ENCODE measurements at regions of chr21 and their contacts with region 1.

Region 1: DNA sequence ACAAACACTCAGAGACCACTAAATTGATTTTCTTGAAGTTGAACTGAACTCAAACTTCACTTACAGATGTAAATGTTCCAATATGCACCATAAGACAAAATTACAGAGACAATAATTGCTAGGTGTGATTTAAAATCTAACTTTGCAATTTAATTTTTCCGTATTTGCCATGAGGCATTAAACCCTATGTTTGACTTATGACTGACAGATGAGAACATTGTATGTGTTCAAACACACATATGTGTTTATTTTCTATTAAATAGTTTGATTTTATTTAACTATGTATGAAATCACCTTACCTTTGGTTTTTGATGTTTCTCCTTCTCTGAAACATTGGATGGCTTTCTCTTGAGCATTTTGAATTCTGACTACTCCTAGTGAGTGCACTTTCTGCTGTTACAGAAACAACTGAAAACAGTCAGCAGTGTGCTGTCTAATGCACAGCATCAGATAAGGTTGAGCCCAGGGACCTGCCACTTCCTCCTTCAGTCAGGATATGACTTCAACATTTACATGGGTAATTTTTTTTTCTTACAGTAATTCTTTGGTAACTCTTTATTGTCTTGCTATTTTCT is at the start of gene SAMSN1:
- DNase-seq: peak; percentile 83
- H3K4me3 Mint-ChIP-seq: peak within 1 kb of the TSS; percentile 89
- H3K27ac Mint-ChIP-seq: peak within 1 kb of the TSS; percentile 95
- H3K4me1 Mint-ChIP-seq: peaks cover 49% of the 10 kb centered on the region
- H3K27me3 Mint-ChIP-seq: no peaks in the 10 kb centered on the region
- total RNA-seq, gene SAMSN1: 47.5 to 48.4 TPM

Region 2: DNA sequence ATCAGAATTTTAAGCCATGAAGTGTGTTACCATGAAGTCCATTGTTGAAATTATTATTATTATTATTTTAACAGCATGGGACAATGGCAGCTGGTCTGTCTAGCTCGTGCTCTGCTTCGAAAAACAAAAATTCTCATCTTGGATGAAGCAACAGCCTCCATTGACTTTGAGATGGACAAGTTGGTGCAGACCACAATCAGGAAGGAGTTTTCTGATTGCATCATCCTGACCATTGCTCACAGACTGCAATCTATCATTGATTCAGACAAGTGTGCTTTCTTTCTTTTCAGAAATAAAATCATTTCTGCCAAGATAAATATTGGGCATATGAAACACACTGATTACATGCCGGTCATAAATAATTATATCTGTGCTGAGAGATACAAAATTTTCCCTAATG is 184.0 kb before region 1 on chr21:
- CTCF ChIA-PET with region 1: no interaction called
- POLR2A ChIA-PET with region 1: no interaction called
- intact Hi-C with region 1: no loop called
- DNase-seq: no peak
- H3K4me3 Mint-ChIP-seq: no peak overlapping the region
- H3K27ac Mint-ChIP-seq: no peak overlapping the region
- H3K4me1 Mint-ChIP-seq: no peaks in the 10 kb centered on the region
- H3K27me3 Mint-ChIP-seq: peaks cover 10% of the 10 kb centered on the region

Region 3: DNA sequence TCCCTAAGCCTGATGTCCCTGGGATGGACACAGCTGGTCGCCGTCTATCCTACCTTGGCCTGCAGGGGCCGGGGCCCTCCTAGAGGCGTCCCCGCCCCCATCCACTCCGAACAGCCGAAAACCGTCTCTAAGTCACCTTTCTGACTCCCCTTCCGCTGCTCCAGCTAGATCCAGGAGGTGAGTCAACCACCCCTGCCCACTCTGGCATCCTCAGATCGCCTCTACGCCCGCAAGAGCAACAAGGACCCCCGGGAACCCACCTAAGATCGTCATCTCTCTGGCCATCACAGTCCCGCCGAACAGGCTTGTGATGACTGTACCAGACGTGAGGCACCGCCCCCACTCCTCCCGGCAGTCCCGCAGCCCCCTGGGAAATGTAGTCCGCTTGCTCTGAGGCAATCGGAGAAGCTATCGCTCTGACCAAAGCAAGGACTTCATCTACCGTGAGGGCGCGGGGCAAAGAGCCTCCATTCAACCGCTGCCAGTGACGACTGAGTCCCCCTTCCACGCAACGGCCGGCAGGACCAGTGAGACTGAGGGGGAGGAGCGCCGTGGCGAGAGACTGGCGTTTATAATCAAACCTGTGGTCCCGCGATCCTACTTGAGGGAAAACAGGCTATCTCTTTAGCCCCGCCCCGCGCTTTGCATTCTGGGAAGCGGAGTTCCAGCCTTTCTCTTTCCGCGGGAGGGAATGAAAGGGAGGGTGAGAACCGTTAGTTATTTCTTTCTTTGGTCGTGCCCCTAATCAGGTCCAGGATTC is 163.0 kb before region 1 on chr21 and contains the start of gene HSPA13:
- CTCF ChIA-PET with region 1: no interaction called
- POLR2A ChIA-PET with region 1: no interaction called
- intact Hi-C with region 1: loop called (anchors 2 kb)
- DNase-seq: peak; percentile 100
- H3K4me3 Mint-ChIP-seq: peak within 1 kb of the TSS; percentile 95
- H3K27ac Mint-ChIP-seq: peak within 1 kb of the TSS; percentile 95
- H3K4me1 Mint-ChIP-seq: peaks cover 27% of the 10 kb centered on the region
- H3K27me3 Mint-ChIP-seq: no peaks in the 10 kb centered on the region
- total RNA-seq, gene HSPA13: 48.5 to 49.1 TPM

Region 4: GRCh38 chr21:14480411-14481031 is 65.5 kb before region 1 on chr21:
- CTCF ChIA-PET with region 1: no interaction called
- POLR2A ChIA-PET with region 1: no interaction called
- intact Hi-C with region 1: no loop called
- DNase-seq: no peak
- H3K4me3 Mint-ChIP-seq: no peak overlapping the region
- H3K27ac Mint-ChIP-seq: no peak overlapping the region
- H3K4me1 Mint-ChIP-seq: peaks cover 34% of the 10 kb centered on the region
- H3K27me3 Mint-ChIP-seq: no peaks in the 10 kb centered on the region

Region 5: DNA sequence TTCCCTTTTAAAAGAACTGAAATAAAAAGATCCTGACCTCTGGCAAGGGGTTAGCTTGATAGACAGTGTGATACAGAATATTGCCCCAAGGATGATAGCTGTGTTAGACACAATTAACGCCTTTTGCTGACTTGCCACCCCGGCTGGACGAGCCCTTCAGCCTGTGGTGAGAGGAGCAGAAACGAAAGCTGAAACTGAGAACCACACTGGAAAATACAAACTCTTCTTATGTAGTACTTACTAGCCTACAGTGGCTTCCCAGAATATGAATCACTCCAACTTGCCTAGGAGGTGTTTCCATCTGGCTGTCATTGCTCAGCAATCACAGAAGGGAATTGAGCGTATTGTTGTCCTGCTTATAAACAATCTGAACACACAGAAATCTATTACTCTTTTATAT is 22.8 kb before region 1 on chr21:
- CTCF ChIA-PET with region 1: interaction called, 3 read pairs
- POLR2A ChIA-PET with region 1: interaction called, 58 read pairs
- intact Hi-C with region 1: loop called (anchors 1 kb)
- DNase-seq: peak; percentile 71
- H3K4me3 Mint-ChIP-seq: peak overlapping the region; percentile 59
- H3K27ac Mint-ChIP-seq: peak overlapping the region; percentile 72
- H3K4me1 Mint-ChIP-seq: peaks cover 65% of the 10 kb centered on the region
- H3K27me3 Mint-ChIP-seq: no peaks in the 10 kb centered on the region

Region 6: GRCh38 chr21:14572204-14572780 is 26.3 kb after region 1 on chr21:
- CTCF ChIA-PET with region 1: interaction called, 3 read pairs
- POLR2A ChIA-PET with region 1: no interaction called
- intact Hi-C with region 1: loop called (anchors 2 kb)
- DNase-seq: no peak
- H3K4me3 Mint-ChIP-seq: no peak overlapping the region
- H3K27ac Mint-ChIP-seq: peak overlapping the region; percentile 5
- H3K4me1 Mint-ChIP-seq: peaks cover 14% of the 10 kb centered on the region
- H3K27me3 Mint-ChIP-seq: no peaks in the 10 kb centered on the region

Region 7: GRCh38 chr21:14591882-14592281 is 45.9 kb after region 1 on chr21:
- CTCF ChIA-PET with region 1: no interaction called
- POLR2A ChIA-PET with region 1: no interaction called
- intact Hi-C with region 1: loop called (anchors 1 kb)
- DNase-seq: no peak
- H3K4me3 Mint-ChIP-seq: no peak overlapping the region
- H3K27ac Mint-ChIP-seq: peak overlapping the region; percentile 23
- H3K4me1 Mint-ChIP-seq: peaks cover 21% of the 10 kb centered on the region
- H3K27me3 Mint-ChIP-seq: no peaks in the 10 kb centered on the region

Region 8: GRCh38 chr21:14675774-14676530 is 130.0 kb after region 1 on chr21:
- CTCF ChIA-PET with region 1: no interaction called
- POLR2A ChIA-PET with region 1: no interaction called
- intact Hi-C with region 1: loop called (anchors 5 kb)
- DNase-seq: no peak
- H3K4me3 Mint-ChIP-seq: peak overlapping the region; percentile 64
- H3K27ac Mint-ChIP-seq: peak overlapping the region; percentile 94
- H3K4me1 Mint-ChIP-seq: peaks cover 32% of the 10 kb centered on the region
- H3K27me3 Mint-ChIP-seq: no peaks in the 10 kb centered on the region

Region 9: GRCh38 chr21:15729674-15730483 is 1183.9 kb after region 1 on chr21 and contains the start of gene USP25:
- CTCF ChIA-PET with region 1: no interaction called
- POLR2A ChIA-PET with region 1: no interaction called
- intact Hi-C with region 1: loop called (anchors 5 kb)
- DNase-seq: peak; percentile 89
- H3K4me3 Mint-ChIP-seq: peak within 1 kb of the TSS; percentile 83
- H3K27ac Mint-ChIP-seq: peak within 1 kb of the TSS; percentile 77
- H3K4me1 Mint-ChIP-seq: peaks cover 20% of the 10 kb centered on the region
- H3K27me3 Mint-ChIP-seq: peaks cover 2% of the 10 kb centered on the region
- total RNA-seq, gene USP25: 31.2 to 31.7 TPM

Measured in activated CD4-positive, alpha-beta memory T cell treated with anti-CD3 and anti-CD28 coated beads for 36 hours (primary cell).